Astrocyte of the cerebellum (primary cell): ENCODE measurements at regions of chr5 and their contacts with region 1.

Region 1: DNA sequence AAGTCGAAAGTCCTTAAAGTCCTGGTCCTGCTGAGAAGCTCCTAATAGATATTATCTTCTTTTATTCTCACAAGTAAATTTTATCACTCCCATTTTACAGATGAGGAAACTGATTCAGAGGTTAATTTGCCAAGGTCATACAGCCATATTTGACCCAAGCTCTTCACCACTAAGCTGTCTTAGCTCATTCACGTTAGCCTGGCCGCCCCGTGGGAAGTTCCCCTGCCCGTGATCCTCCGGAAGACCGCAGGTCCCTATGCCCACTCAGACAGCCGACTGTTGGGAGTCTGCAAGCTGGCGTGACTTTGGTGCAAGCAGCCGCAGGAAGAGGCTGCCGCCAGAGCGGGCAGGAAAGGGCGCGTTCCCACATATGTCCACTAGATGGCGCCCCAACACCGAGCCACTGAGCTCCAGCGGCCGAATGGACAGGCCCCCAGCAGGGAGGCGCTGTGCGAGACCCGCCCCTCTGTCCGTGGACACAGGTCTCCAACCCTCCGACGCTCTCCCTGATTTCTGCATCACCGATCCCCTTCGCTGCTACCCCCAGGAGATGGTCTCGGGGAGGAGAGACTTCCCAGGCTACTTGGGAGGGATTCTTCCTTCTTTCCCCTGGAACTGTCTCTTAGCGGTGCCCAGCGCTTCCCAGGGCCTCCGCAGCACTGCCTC is 10.0 kb upstream of the ARAP3 start:
- DNase-seq: peak; percentile 29
- H3K4me3 ChIP-seq: peak overlapping the region; percentile 33
- CTCF ChIP-seq: peak; percentile 86

Region 2: DNA sequence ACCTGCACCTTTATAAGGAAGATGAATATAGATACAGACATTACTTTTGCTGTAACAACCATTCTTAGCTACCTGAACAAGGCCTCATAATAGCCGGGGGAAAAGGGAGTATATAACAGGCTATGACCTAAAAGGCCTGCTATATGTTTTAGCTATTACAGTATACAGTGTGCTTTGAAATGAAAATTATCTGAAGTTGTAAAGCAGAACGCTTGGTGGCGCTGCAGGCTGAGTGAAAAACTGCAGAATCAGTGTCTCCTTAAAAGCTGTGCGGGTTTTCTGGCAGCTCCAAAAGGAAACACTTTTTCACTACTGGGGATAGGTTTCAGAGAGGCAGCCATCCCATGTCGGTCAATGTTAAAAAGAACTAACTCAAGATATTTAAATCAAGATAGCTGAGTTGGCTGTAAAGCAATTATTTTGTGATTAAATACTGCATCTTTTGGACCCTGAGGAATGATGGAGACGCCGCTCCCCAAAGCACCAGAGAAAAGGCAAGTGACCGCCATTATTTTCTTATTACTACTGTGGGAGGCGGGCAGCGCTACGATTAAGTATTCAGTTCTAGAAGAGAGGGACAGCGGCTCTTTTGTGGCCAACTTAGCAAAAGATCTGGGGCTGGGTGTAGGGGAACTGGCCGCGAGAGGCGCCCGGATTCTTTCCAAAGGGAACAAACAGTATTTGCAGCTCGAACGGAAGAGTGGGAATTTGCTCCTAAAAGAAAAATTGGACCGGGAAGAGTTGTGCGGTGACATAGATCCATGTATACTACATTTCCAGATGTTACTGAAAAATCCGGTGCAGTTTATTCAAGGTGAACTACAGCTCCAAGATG is 536.2 kb before region 1 on chr5:
- in situ Hi-C with region 1: no loop called
- DNase-seq: no peak
- H3K4me3 ChIP-seq: no peak overlapping the region
- CTCF ChIP-seq: no peak

Region 3: DNA sequence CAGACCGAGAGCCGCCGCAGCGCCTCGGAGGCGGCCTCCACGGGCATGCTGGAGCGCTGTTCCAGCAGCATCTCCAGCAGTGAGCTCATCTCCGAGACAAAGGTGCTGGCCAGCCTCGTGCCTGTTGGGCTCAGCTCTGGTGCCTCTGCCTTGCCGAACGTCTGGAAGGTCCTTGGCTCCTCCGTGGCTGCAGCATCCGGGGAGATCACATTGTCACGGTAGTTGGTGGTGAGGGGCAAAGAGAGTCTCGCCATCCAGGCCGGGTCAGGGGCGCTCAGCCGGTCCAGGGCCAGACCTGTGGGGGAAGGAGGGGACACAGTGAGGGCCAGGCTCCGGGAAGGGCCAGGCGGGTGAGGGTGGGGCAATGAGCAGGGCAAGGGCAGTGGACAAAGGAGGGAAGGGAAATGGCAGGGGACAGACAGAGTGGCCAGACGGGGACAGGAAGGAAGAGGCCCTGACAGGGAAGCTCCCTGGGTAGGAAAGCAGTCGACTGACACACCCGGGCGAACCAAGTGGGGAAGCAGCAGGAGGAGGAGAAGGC is 253.6 kb after region 1 on chr5:
- in situ Hi-C with region 1: loop called (anchors 5 kb)
- DNase-seq: no peak
- H3K4me3 ChIP-seq: no peak overlapping the region
- CTCF ChIP-seq: no peak